ENCODE measurements at regions of chr14 and their contacts with region 1.

Region 1: GRCh38 chr14:72516936-72517700 is 376.8 kb downstream of the DPF3 start:
- DNase-seq: peak; percentile 77
- H3K4me3 ChIP-seq: no peak overlapping the region
- H3K27ac ChIP-seq: peak overlapping the region; percentile 43
- H3K27me3 ChIP-seq: no peaks in the 10 kb centered on the region
- CTCF ChIP-seq: peak; percentile 93

Region 2: GRCh38 chr14:72503696-72504368 is 13.3 kb before region 1 on chr14:
- CTCF ChIA-PET with region 1: interaction called, 34 read pairs
- POLR2A ChIA-PET with region 1: no interaction called
- DNase-seq: no peak
- H3K4me3 ChIP-seq: no peak overlapping the region
- H3K27ac ChIP-seq: no peak overlapping the region
- H3K27me3 ChIP-seq: peaks cover 3% of the 10 kb centered on the region
- CTCF ChIP-seq: no peak

Region 3: GRCh38 chr14:72736786-72737558 is 219.9 kb after region 1 on chr14:
- CTCF ChIA-PET with region 1: interaction called, 16 read pairs
- POLR2A ChIA-PET with region 1: no interaction called
- DNase-seq: no peak
- H3K4me3 ChIP-seq: no peak overlapping the region
- H3K27ac ChIP-seq: peak overlapping the region; percentile 49
- H3K27me3 ChIP-seq: no peaks in the 10 kb centered on the region
- CTCF ChIP-seq: no peak

Region 4: DNA sequence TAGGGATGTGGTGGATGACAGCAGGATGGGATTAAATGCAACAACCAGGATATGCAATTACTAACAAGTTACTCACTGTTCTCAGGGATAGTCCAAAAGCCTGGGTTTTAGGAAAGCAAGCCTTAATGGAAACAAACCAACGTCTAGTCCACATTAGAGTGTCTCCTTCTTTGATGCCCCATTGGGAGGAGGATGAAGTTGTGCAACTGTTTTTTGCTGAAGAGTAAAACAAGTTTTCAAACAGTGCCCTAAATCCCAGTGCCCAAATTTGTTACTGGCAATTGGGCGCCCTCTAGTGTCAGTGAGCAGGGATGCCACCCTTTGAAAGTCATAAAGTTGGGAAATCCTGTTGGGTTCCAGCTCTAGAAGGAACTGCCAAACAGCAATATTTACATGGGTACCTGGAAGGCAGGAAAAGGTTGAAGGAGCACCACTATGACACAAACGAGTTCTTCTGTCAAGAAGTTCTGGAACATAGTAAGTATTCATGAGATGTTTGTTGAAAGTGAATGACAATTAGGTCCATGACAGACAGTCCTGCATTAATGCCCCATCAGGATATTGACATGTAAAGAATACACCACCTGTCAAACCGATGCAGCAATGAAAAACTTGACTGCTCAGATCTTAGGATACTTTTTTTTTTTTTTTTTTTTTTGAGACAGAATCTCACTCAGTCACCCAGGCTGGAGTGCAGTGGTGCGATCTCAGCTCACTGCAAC is 387.9 kb after region 1 on chr14:
- CTCF ChIA-PET with region 1: interaction called, 283 read pairs
- POLR2A ChIA-PET with region 1: interaction called, 3 read pairs
- DNase-seq: peak; percentile 49
- H3K4me3 ChIP-seq: no peak overlapping the region
- H3K27ac ChIP-seq: no peak overlapping the region
- H3K27me3 ChIP-seq: no peaks in the 10 kb centered on the region
- CTCF ChIP-seq: peak; percentile 96

Region 5: DNA sequence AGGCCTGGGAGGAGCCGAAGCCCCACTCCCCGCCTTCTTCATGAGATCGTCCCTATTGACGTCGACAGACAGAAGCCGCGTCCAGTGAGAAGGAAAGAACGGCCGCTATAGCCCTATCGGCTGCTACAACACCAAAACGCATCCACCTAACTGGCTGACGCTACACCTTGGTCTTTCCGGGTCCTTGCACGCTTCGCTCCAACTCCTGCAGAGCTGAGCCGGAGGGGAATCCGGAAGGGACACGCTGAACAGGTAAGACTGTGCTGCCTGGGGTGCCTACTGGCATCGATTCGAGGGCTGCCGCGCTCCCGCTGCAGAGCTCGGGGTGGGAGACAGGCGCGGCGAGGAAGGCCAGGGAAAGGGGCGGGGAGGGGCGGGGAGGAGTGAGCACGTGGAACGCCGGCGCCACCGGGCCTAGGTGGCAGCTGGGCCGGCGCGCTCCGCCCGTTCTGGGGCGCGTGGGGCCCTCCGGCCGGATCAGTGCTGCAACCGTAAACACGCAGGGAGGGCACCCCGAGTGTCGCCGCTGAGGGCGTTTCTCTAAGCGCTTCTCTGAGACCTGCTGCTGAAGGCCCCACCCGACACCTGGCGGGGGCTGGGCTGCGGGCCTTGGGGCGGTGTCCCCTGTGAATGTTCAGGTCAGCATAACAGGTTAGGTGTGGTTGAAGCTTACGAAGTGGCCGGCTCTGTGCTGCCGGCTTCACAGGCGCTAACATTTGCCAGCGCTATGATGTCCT is 409.3 kb after region 1 on chr14 and contains the start of gene DCAF4:
- CTCF ChIA-PET with region 1: interaction called, 10 read pairs
- POLR2A ChIA-PET with region 1: no interaction called
- DNase-seq: peak; percentile 94
- H3K4me3 ChIP-seq: peak within 1 kb of the TSS; percentile 98
- H3K27ac ChIP-seq: peak within 1 kb of the TSS; percentile 70
- H3K27me3 ChIP-seq: no peaks in the 10 kb centered on the region
- CTCF ChIP-seq: no peak
- polyA plus RNA-seq, gene DCAF4: 14.7 and 14.8 TPM in 2 replicates

Region 6: DNA sequence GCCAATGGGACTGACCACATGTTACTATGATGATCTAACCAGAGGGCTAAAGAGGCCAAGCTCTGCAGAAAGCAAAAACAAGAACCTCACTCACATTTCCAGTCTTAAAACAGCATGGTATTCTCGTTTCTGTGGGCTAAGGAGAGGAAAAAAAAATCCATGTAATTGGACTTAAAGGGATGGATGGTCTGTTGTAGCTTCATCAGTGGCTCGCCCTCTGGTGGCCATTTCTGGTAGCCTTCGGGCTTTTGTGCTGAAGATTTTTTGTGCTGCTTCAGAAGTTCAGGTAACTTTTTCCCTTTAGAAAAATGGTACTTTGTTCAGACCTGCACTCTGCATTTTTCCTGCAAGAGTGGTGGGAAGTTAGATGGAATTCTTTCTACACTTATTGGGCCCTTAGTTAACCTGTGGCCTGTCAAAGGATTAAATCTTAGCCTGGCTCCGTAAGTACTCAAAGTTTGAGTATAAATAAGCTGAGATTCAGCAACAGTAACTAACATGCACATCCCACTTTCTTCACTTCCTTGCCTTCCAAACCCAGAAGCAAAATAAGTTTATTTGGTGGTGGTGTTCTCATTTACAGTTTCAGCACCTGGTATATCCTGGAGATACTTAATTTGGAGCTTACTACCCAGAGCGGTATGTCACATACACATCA is 431.5 kb after region 1 on chr14:
- CTCF ChIA-PET with region 1: interaction called, 479 read pairs
- POLR2A ChIA-PET with region 1: interaction called, 9 read pairs
- DNase-seq: peak; percentile 34
- H3K4me3 ChIP-seq: no peak overlapping the region
- H3K27ac ChIP-seq: no peak overlapping the region
- H3K27me3 ChIP-seq: no peaks in the 10 kb centered on the region
- CTCF ChIP-seq: peak; percentile 88